ENCODE measurements at regions of chr2 and their contacts with region 1.

Region 1: DNA sequence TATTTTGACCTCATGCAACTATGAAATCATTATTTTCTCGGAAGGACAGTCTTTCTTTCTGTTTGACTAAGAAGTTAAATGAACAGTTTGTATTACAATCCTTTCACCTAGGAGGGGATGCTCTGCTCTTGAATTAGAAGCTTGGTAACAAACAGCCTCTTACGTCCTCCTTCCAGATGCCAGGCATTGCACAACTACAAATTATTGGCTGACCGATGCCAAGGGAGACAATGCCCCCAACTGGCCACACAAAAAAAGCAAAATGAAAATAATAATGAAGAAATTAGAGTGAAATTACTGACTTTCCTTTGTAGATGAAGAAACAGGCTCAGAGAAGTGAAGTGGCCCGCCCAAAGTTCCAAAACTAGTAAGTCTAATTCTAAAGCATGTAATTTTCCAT is 177.9 kb downstream of the CYRIA start:
- DNase-seq: peak; percentile 42 to 50
- H3K4me3 ChIP-seq: no peak overlapping the region
- H3K4me3 Mint-ChIP-seq: no peak overlapping the region
- H3K27ac Mint-ChIP-seq: peak overlapping the region; percentile 31
- H3K4me1 ChIP-seq: no peaks in the 10 kb centered on the region
- H3K4me1 Mint-ChIP-seq: peaks cover 16% of the 10 kb centered on the region
- H3K27me3 ChIP-seq: no peaks in the 10 kb centered on the region
- H3K27me3 Mint-ChIP-seq: no peaks in the 10 kb centered on the region
- CTCF ChIP-seq: peak; percentile 34 to 59

Region 2: GRCh38 chr2:16407358-16407757 is 80.3 kb before region 1 on chr2:
- CTCF ChIA-PET with region 1: no interaction called
- POLR2A ChIA-PET with region 1: no interaction called
- intact Hi-C with region 1: loop called (anchors 5 kb)
- DNase-seq: no peak
- H3K4me3 ChIP-seq: no peak overlapping the region
- H3K4me3 Mint-ChIP-seq: no peak overlapping the region
- H3K27ac Mint-ChIP-seq: no peak overlapping the region
- H3K4me1 ChIP-seq: peaks cover 46% of the 10 kb centered on the region
- H3K4me1 Mint-ChIP-seq: peaks cover 43% of the 10 kb centered on the region
- H3K27me3 ChIP-seq: no peaks in the 10 kb centered on the region
- H3K27me3 Mint-ChIP-seq: no peaks in the 10 kb centered on the region
- CTCF ChIP-seq: no peak

Region 3: DNA sequence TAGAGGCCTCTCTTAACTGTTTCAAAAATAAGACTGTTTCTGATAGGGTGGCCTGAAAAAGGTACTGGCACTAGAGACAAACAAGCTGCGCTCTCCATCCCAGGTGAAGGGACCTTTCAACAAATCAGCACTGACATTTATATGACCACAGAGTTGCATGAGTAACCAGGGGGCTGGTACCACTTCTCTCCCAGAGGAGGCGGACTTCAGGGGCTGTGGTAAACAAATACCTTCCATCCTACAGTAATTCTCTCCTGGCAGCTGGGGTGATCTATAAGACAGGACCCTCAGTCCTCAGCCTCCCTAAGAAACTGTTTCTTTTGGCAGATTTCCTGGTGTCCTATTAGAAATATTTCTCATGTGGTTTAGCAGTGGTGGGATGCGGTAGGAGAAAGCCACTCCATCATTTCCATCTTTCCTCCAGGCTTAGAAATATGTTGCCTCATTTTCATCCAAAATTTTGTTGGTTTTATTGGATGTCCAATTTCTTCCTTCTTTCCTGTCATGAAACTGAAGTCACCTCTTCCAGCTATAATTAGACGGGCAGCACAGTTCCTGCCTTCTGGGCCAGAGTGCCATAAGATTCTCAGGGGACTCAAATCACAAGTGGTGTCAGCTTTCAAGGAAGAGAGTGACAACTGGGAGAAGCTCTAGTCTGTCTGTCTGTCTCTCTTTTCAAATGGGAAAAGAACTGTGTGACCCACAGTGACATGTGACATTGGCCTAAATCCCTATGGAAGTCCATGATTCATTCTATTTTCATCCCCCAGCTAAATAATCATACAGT is 81.5 kb after region 1 on chr2:
- CTCF ChIA-PET with region 1: no interaction called
- POLR2A ChIA-PET with region 1: no interaction called
- intact Hi-C with region 1: no loop called
- DNase-seq: no peak
- H3K4me3 ChIP-seq: no peak overlapping the region
- H3K4me3 Mint-ChIP-seq: no peak overlapping the region
- H3K27ac Mint-ChIP-seq: no peak overlapping the region
- H3K4me1 ChIP-seq: peaks cover 14% of the 10 kb centered on the region
- H3K4me1 Mint-ChIP-seq: peaks cover 11% of the 10 kb centered on the region
- H3K27me3 ChIP-seq: no peaks in the 10 kb centered on the region
- H3K27me3 Mint-ChIP-seq: peaks cover 3% of the 10 kb centered on the region
- CTCF ChIP-seq: no peak

Measured in Caco-2 (cell line).